ENCODE measurements at regions of chr16 and their contacts with region 1.

Region 1: DNA sequence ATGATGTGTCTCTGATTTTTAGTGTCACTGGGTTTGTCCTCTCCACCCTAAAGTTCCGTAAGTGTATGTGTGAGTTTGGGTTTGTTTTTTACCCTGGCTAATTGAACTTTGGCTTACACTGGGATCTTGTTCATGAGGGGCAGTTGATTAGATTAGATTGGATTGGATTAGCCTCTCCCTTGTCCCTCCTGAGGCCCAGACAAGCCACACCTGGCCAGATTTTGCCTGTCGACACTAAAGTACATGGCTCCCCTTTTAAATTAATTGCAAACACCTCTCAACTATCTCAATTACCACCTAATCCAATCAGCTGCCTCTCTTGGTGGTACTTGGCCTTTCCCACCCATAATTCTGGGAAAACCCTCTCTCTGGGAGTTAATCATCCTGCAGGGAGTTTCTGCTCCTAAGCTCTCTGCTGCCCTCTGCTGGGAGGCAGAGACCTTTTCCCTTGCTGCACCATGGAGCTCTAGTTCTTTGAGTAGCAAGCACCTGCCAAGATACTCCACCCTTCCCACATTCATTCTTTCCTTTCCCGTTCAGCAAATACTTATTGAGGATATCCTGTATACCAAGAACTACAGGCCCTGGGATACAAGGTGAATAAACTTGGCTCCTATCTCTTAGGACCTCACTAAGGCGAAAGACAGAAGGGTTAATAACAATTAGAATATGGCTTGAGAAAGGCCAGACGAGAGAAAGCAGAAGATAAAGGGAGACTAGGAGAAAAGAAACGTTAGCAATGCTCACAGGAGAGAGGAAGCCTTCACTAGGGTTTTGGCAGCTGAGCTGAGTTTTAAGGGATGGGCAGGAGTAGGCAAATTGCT is 60.0 kb upstream of the MPHOSPH6 start:
- DNase-seq: peak; percentile 80
- H3K4me3 ChIP-seq: no peak overlapping the region
- H3K27ac ChIP-seq: no peak overlapping the region
- H3K4me1 ChIP-seq: no peaks in the 10 kb centered on the region
- H3K27me3 ChIP-seq: no peaks in the 10 kb centered on the region; the same call in 1 of the 2 replicates

Region 2: GRCh38 chr16:81940781-81941560 is 289.0 kb before region 1 on chr16:
- in situ Hi-C with region 1: loop called (anchors 25 kb)
- DNase-seq: peak; percentile 81
- H3K4me3 ChIP-seq: peak overlapping the region; percentile 7; the same call in 1 of the 2 replicates
- H3K27ac ChIP-seq: peak overlapping the region; percentile 50
- H3K4me1 ChIP-seq: peaks cover 25% of the 10 kb centered on the region
- H3K27me3 ChIP-seq: no peaks in the 10 kb centered on the region

Region 3: GRCh38 chr16:82034981-82035612 is 194.9 kb before region 1 on chr16 and contains the start of gene HSD17B2:
- in situ Hi-C with region 1: loop called (anchors 5 kb)
- DNase-seq: peak; percentile 33
- H3K4me3 ChIP-seq: no peak within 1 kb of the TSS
- H3K27ac ChIP-seq: no peak within 1 kb of the TSS
- H3K4me1 ChIP-seq: peaks cover 18% of the 10 kb centered on the region
- H3K27me3 ChIP-seq: no peaks in the 10 kb centered on the region
- total RNA-seq, gene HSD17B2: not detected in 2 replicates

Region 4: DNA sequence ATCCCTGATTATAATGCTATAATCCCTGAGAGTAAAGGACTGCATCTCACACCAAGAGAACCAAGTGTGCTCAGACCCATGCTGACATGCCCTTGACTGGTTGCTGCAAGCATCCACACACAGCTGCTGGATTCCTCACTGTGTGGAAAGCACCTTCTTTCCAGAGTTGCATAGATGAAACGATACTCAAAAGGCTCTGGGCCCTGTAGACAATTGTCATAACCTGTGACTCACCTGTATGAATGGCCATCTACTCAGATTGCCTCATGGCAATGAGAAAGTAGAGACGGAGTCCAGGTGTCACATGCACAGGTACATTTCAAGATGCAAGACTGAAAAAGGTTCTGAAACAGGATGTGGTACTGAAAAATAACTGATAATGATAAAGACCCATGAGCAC is 118.1 kb before region 1 on chr16:
- in situ Hi-C with region 1: no loop called
- DNase-seq: no peak
- H3K4me3 ChIP-seq: no peak overlapping the region
- H3K27ac ChIP-seq: no peak overlapping the region
- H3K4me1 ChIP-seq: no peaks in the 10 kb centered on the region
- H3K27me3 ChIP-seq: no peaks in the 10 kb centered on the region

Region 5: GRCh38 chr16:82181456-82182185 is 48.4 kb before region 1 on chr16:
- in situ Hi-C with region 1: no loop called
- DNase-seq: no peak
- H3K4me3 ChIP-seq: no peak overlapping the region
- H3K27ac ChIP-seq: no peak overlapping the region
- H3K4me1 ChIP-seq: no peaks in the 10 kb centered on the region
- H3K27me3 ChIP-seq: no peaks in the 10 kb centered on the region

Region 6: DNA sequence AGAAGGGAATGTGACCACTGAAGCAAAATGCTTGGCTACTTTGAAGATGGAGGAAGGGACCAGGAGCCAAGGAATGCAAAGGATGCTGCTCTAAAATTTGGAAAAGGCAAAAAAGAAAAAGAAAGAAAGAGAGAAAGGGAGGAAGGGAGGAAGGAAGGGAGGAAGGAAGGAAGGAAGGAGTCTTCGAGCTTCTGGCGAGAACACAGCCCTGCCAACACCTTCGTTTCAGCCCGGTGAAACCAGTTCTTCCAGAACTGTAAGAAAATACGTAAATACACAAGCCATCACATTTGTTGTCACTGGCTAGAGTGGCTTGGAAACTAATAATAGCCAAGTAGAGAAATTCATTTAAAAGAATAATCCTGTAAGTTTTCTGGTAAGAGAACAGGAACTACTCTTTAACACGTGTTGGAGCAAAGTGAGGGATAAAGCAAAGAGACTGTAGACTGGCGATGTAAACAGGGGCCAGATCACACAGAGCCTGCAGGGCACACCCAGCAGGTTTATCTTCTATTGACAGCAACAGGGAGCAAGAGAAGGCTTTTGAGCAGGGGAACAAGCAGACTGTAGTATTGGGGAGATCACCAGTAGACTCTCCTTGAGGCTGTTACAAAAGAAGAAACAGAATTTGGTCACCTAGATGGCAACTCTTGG is 128.7 kb after region 1 on chr16:
- in situ Hi-C with region 1: no loop called
- DNase-seq: no peak
- H3K4me3 ChIP-seq: no peak overlapping the region
- H3K27ac ChIP-seq: no peak overlapping the region
- H3K4me1 ChIP-seq: no peaks in the 10 kb centered on the region
- H3K27me3 ChIP-seq: peaks cover 4% of the 10 kb centered on the region; the same call in 1 of the 2 replicates

Measured in GM23248 (cell line).